Mammary epithelial cell (primary cell): ENCODE measurements at regions of chr14 and their contacts with region 1.

Region 1: DNA sequence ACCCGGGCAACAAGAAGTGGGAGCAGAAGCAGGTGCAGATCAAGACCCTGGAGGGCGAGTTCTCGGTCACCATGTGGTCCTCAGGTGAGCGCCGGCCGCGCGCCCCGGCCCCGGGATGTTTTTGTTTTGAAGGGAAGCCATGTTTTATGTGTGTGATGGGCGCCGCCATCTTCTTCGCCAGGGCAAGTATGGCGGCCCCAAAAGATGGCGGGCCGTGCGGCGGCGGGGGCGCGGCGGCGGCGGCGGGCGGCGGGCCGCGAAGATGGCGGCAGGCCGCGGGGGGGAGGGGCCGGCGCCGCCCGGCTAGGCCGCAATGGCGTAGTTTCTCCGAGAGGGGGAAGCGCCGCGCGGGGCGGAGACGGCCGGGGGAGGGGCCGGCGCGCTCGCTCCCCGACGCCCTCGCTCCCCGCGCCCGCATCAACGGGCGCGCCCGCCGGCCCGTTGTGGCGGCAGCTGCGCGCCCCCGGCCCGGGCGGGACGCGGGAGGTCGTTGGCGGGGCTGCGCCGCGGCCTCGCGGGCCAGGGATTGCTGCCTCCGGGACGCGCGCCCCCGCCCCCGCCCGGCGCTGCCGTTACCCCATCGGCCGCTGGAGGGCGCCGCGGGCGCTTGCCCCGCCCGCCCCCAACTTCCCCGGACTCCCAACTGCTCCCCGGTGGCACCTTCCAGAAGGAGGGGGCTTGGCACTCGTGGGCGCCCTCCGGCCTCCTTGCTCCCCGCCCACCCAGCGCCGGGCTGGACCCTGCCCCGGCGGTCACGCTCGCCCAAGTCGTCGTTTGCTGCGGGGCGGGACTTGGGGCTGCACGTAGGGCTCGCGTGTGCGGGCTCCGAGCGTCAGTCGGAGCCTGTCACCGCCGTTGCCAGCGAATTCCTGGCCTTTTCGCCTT is 1.1 kb downstream of the YY1 start:
- DNase-seq: peak; percentile 93
- H3K4me3 ChIP-seq: peak overlapping the region; percentile 66 to 81 (median 77)
- H3K27ac ChIP-seq: peak overlapping the region; percentile 79
- H3K4me1 ChIP-seq: peaks cover 13% of the 10 kb centered on the region
- H3K27me3 ChIP-seq: no peaks in the 10 kb centered on the region
- CTCF ChIP-seq: peak; percentile 21 to 59

Region 2: GRCh38 chr14:100213956-100214774 is 25.9 kb before region 1 on chr14:
- CTCF ChIA-PET with region 1: no interaction called
- dilution Hi-C with region 1: no loop called
- in situ Hi-C with region 1: no loop called
- intact Hi-C with region 1: loop called (anchors 1 kb)
- DNase-seq: peak; percentile 77
- H3K4me3 ChIP-seq: peak overlapping the region; percentile 73 to 87 (median 76)
- H3K27ac ChIP-seq: peak overlapping the region; percentile 55
- H3K4me1 ChIP-seq: peaks cover 9% of the 10 kb centered on the region
- H3K27me3 ChIP-seq: no peaks in the 10 kb centered on the region
- CTCF ChIP-seq: no peak

Region 3: GRCh38 chr14:100285021-100285912 is 45.2 kb after region 1 on chr14:
- CTCF ChIA-PET with region 1: interaction called, 4 read pairs
- dilution Hi-C with region 1: no loop called
- in situ Hi-C with region 1: no loop called
- intact Hi-C with region 1: loop called (anchors 2 kb)
- DNase-seq: peak; percentile 50
- H3K4me3 ChIP-seq: peak overlapping the region; percentile 68 to 89 (median 74)
- H3K27ac ChIP-seq: peak overlapping the region; percentile 53
- H3K4me1 ChIP-seq: peaks cover 42% of the 10 kb centered on the region
- H3K27me3 ChIP-seq: no peaks in the 10 kb centered on the region
- CTCF ChIP-seq: peak; percentile 53 to 92

Region 4: DNA sequence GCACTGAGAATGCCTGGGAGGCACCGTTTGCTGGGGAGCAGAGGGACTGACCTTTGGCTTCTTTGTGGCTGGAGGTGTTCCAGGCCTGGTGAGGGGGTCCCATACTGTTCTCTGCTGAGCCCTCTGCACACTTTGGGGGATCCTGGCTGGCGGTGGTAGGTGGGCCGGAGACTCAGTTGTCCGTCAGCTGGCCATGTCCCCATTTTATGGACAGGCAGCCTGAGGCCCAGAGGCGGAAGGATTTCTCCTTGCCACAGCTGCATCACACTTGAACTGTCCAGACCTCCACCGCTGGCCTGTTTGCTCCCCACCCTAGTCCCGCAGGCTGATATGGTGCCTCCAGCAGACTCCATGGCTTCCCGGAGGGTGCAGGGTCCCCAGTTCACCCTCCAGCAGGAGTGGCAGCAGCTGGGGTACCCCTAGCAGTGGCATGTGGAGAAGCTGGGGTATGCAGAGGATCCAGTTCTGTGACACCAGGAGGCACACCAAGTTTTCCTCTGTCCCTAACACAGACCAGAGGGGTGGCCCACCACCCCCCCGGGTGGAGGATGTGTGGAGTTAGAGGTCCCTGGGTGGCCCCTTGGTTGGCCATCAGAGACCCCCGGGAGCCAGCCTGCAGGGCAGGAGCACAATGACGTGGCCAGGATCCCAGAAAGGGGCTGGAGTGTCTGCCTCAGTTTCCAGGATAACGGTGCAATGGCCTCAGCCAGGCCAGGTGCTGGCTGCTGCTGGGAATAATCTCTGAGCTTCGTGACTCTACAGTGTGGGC is 51.4 kb after region 1 on chr14:
- CTCF ChIA-PET with region 1: interaction called, 13 read pairs
- dilution Hi-C with region 1: no loop called
- in situ Hi-C with region 1: no loop called
- intact Hi-C with region 1: no loop called
- DNase-seq: no peak
- H3K4me3 ChIP-seq: no peak overlapping the region
- H3K27ac ChIP-seq: no peak overlapping the region
- H3K4me1 ChIP-seq: no peaks in the 10 kb centered on the region
- H3K27me3 ChIP-seq: no peaks in the 10 kb centered on the region
- CTCF ChIP-seq: no peak

Region 5: GRCh38 chr14:100317912-100318808 is 78.1 kb after region 1 on chr14:
- CTCF ChIA-PET with region 1: no interaction called
- dilution Hi-C with region 1: no loop called
- in situ Hi-C with region 1: no loop called
- intact Hi-C with region 1: no loop called
- DNase-seq: no peak
- H3K4me3 ChIP-seq: no peak overlapping the region
- H3K27ac ChIP-seq: no peak overlapping the region
- H3K4me1 ChIP-seq: peaks cover 25% of the 10 kb centered on the region
- H3K27me3 ChIP-seq: no peaks in the 10 kb centered on the region
- CTCF ChIP-seq: peak; percentile 43 to 72

Region 6: GRCh38 chr14:100375963-100376735 is 136.1 kb after region 1 on chr14:
- CTCF ChIA-PET with region 1: no interaction called
- dilution Hi-C with region 1: no loop called
- in situ Hi-C with region 1: no loop called
- intact Hi-C with region 1: loop called (anchors 1 kb)
- DNase-seq: peak; percentile 96
- H3K4me3 ChIP-seq: peak within 1 kb of the TSS; percentile 90 to 94 (median 91)
- H3K27ac ChIP-seq: peak within 1 kb of the TSS; percentile 98
- H3K4me1 ChIP-seq: peaks cover 19% of the 10 kb centered on the region
- H3K27me3 ChIP-seq: no peaks in the 10 kb centered on the region
- CTCF ChIP-seq: no peak